Naive thymus-derived CD4-positive, alpha-beta T cell (primary cell): ENCODE measurements at regions of chr22 and their contacts with region 1.

Region 1: GRCh38 chr22:40289991-40290459 is 56.3 kb upstream of the ADSL start:
- DNase-seq: peak; percentile 45 to 83 (median 75)
- ATAC-seq: peak; percentile 94
- H3K4me3 ChIP-seq: peak overlapping the region; percentile 15
- H3K4me3 Mint-ChIP-seq: peak overlapping the region; percentile 53 to 86 (median 78)
- H3K27ac ChIP-seq: peak overlapping the region; percentile 87
- H3K27ac Mint-ChIP-seq: peak overlapping the region; percentile 93 to 99 (median 96)
- H3K4me1 ChIP-seq: peaks cover 22 to 41% of the 10 kb centered on the region in 2 donors
- H3K4me1 Mint-ChIP-seq: peaks cover 25 to 80% (median 70%) of the 10 kb centered on the region in 7 donors
- H3K27me3 ChIP-seq: no peaks in the 10 kb centered on the region
- H3K27me3 Mint-ChIP-seq: no peaks in the 10 kb centered on the region

Region 2: DNA sequence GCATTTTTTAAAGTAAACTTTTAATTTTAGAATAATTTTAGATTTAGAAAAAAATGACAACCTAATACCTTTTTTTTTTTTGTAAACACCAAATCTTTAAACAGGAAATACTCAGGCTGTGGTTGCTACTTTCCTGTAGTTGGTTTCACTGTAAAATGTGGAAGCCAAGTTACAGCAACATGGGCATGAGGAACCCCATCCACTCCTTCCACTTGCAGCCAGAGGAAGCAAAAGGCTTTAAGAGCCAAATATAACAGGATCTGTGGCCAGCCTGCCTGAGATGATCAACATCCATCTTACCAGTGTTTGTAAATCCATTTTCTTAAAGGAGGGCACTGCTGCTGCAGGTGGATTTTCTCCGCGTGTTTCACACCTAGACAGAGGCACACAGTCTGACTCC is 46.1 kb before region 1 on chr22:
- CTCF ChIA-PET with region 1: no interaction called
- POLR2A ChIA-PET with region 1: interaction called, 3 read pairs
- intact Hi-C with region 1: loop called (anchors 5 kb)
- DNase-seq: peak in 5 of 9 donors; percentile 23 to 45 (median 37)
- ATAC-seq: no peak
- H3K4me3 ChIP-seq: no peak overlapping the region
- H3K4me3 Mint-ChIP-seq: peak overlapping the region; percentile 52 to 81 (median 64)
- H3K27ac ChIP-seq: no peak overlapping the region
- H3K27ac Mint-ChIP-seq: peak overlapping the region; percentile 40 to 91 (median 81)
- H3K4me1 ChIP-seq: peaks cover 61 to 71% of the 10 kb centered on the region in 2 donors
- H3K4me1 Mint-ChIP-seq: peaks cover 64 to 96% (median 89%) of the 10 kb centered on the region in 7 donors
- H3K27me3 ChIP-seq: no peaks in the 10 kb centered on the region
- H3K27me3 Mint-ChIP-seq: no peaks in the 10 kb centered on the region

Region 3: GRCh38 chr22:40276996-40277823 is 12.8 kb before region 1 on chr22:
- CTCF ChIA-PET with region 1: no interaction called
- POLR2A ChIA-PET with region 1: interaction called, 6 read pairs
- intact Hi-C with region 1: loop called (anchors 1 kb)
- DNase-seq: no peak
- ATAC-seq: no peak
- H3K4me3 ChIP-seq: peak overlapping the region; percentile 40
- H3K4me3 Mint-ChIP-seq: peak overlapping the region in 6 of 10 donors; percentile 1 to 88 (median 64)
- H3K27ac ChIP-seq: peak overlapping the region; percentile 82
- H3K27ac Mint-ChIP-seq: peak overlapping the region; percentile 57 to 97 (median 89)
- H3K4me1 ChIP-seq: peaks cover 0 to 35% of the 10 kb centered on the region in 2 donors
- H3K4me1 Mint-ChIP-seq: peaks cover 23 to 89% (median 69%) of the 10 kb centered on the region in 7 donors
- H3K27me3 ChIP-seq: no peaks in the 10 kb centered on the region
- H3K27me3 Mint-ChIP-seq: no peaks in the 10 kb centered on the region

Region 4: GRCh38 chr22:40310081-40310767 is 20.2 kb after region 1 on chr22:
- CTCF ChIA-PET with region 1: interaction called, 4 read pairs
- POLR2A ChIA-PET with region 1: interaction called, 4 read pairs
- intact Hi-C with region 1: loop called in 1 of 2 experiments (anchors 2 kb)
- DNase-seq: no peak
- ATAC-seq: no peak
- H3K4me3 ChIP-seq: no peak overlapping the region
- H3K4me3 Mint-ChIP-seq: no peak overlapping the region
- H3K27ac ChIP-seq: no peak overlapping the region
- H3K27ac Mint-ChIP-seq: peak overlapping the region in 8 of 9 donors; percentile 16 to 86 (median 69)
- H3K4me1 ChIP-seq: peaks cover 0 to 29% of the 10 kb centered on the region in 2 donors
- H3K4me1 Mint-ChIP-seq: peaks cover 24 to 56% (median 49%) of the 10 kb centered on the region in 7 donors
- H3K27me3 ChIP-seq: no peaks in the 10 kb centered on the region
- H3K27me3 Mint-ChIP-seq: no peaks in the 10 kb centered on the region

Region 5: GRCh38 chr22:40326905-40327735 is 37.1 kb after region 1 on chr22:
- CTCF ChIA-PET with region 1: interaction called, 4 read pairs
- POLR2A ChIA-PET with region 1: interaction called, 7 read pairs
- intact Hi-C with region 1: loop called (anchors 1 kb)
- DNase-seq: peak in 6 of 9 donors; percentile 37 to 79 (median 53)
- ATAC-seq: no peak
- H3K4me3 ChIP-seq: no peak overlapping the region
- H3K4me3 Mint-ChIP-seq: peak overlapping the region; percentile 31 to 78 (median 58)
- H3K27ac ChIP-seq: peak overlapping the region; percentile 59
- H3K27ac Mint-ChIP-seq: peak overlapping the region; percentile 53 to 99 (median 95)
- H3K4me1 ChIP-seq: peaks cover 62 to 96% of the 10 kb centered on the region in 2 donors
- H3K4me1 Mint-ChIP-seq: peaks cover 51 to 100% (median 97%) of the 10 kb centered on the region in 7 donors
- H3K27me3 ChIP-seq: no peaks in the 10 kb centered on the region
- H3K27me3 Mint-ChIP-seq: no peaks in the 10 kb centered on the region

Region 6: GRCh38 chr22:40443732-40444131 is 153.7 kb after region 1 on chr22:
- CTCF ChIA-PET with region 1: no interaction called
- POLR2A ChIA-PET with region 1: no interaction called
- intact Hi-C with region 1: no loop called
- DNase-seq: no peak
- ATAC-seq: peak; percentile 50
- H3K4me3 ChIP-seq: no peak overlapping the region
- H3K4me3 Mint-ChIP-seq: peak overlapping the region in 3 of 10 donors; percentile 9 to 69 (median 15)
- H3K27ac ChIP-seq: peak overlapping the region; percentile 35
- H3K27ac Mint-ChIP-seq: peak overlapping the region in 8 of 9 donors; percentile 38 to 88 (median 68)
- H3K4me1 ChIP-seq: peaks cover 0 to 29% of the 10 kb centered on the region in 2 donors
- H3K4me1 Mint-ChIP-seq: peaks cover 52 to 94% (median 83%) of the 10 kb centered on the region in 7 donors
- H3K27me3 ChIP-seq: no peaks in the 10 kb centered on the region
- H3K27me3 Mint-ChIP-seq: no peaks in the 10 kb centered on the region